Activated naive CD4-positive, alpha-beta T cell treated with anti-CD3 and anti-CD28 coated beads for 36 hours (primary cell): ENCODE measurements at regions of chr4 and their contacts with region 1.

Region 1: GRCh38 chr4:40629401-40630334 is at the start of gene RBM47:
- DNase-seq: peak; percentile 67
- H3K4me3 Mint-ChIP-seq: peak within 1 kb of the TSS; percentile 77
- H3K27ac Mint-ChIP-seq: no peak within 1 kb of the TSS
- H3K4me1 Mint-ChIP-seq: peaks cover 25% of the 10 kb centered on the region
- H3K27me3 Mint-ChIP-seq: peaks cover 11% of the 10 kb centered on the region
- total RNA-seq, gene RBM47: 1.1 to 1.7 TPM

Region 2: GRCh38 chr4:40662962-40663604 is 33.4 kb after region 1 on chr4:
- CTCF ChIA-PET with region 1: no interaction called
- intact Hi-C with region 1: loop called (anchors 2 kb)
- DNase-seq: peak; percentile 51
- H3K4me3 Mint-ChIP-seq: no peak overlapping the region
- H3K27ac Mint-ChIP-seq: peak overlapping the region; percentile 30
- H3K4me1 Mint-ChIP-seq: peaks cover 12% of the 10 kb centered on the region
- H3K27me3 Mint-ChIP-seq: no peaks in the 10 kb centered on the region

Region 3: GRCh38 chr4:40699648-40700047 is 70.0 kb after region 1 on chr4:
- CTCF ChIA-PET with region 1: no interaction called
- intact Hi-C with region 1: loop called (anchors 2 kb)
- DNase-seq: no peak
- H3K4me3 Mint-ChIP-seq: no peak overlapping the region
- H3K27ac Mint-ChIP-seq: no peak overlapping the region
- H3K4me1 Mint-ChIP-seq: peaks cover 17% of the 10 kb centered on the region
- H3K27me3 Mint-ChIP-seq: no peaks in the 10 kb centered on the region

Region 4: GRCh38 chr4:41185614-41186597 is 556.2 kb after region 1 on chr4:
- CTCF ChIA-PET with region 1: no interaction called
- intact Hi-C with region 1: no loop called
- DNase-seq: no peak
- H3K4me3 Mint-ChIP-seq: no peak overlapping the region
- H3K27ac Mint-ChIP-seq: no peak overlapping the region
- H3K4me1 Mint-ChIP-seq: no peaks in the 10 kb centered on the region
- H3K27me3 Mint-ChIP-seq: peaks cover 10% of the 10 kb centered on the region